ENCODE measurements at regions of chr7 and their contacts with region 1.

Region 1: DNA sequence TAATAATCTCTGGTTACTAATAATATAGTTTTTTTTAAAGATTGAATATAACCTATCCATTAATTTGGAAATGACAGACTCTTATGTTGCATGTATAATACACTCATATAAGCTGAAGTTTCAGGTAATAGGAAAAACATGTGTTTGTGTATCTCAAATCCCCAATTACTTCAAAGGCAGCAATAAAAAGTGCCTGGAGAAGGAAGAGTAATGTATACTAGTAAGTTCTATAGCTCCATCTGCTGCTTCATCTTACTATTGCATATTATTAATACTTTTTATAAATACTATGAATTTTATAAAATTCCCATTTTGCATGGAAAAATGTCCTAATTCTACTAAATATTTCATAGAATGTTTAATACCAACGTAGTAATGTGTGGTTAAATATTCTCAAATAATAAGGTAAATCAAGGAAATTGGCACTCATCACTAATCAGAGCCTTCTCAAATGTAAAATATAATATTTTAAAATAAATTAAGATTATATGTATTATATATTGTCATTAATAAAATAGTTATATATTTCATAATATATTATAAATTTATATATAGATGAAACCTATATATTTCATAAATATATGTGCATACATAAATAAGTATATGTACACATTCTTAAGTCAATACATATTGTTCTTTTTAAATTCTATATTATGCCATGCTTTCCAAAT is 311.9 kb downstream of the HGF start:
- DNase-seq: no peak
- H3K4me3 ChIP-seq: no peak overlapping the region
- CTCF ChIP-seq: peak; percentile 27

Region 2: DNA sequence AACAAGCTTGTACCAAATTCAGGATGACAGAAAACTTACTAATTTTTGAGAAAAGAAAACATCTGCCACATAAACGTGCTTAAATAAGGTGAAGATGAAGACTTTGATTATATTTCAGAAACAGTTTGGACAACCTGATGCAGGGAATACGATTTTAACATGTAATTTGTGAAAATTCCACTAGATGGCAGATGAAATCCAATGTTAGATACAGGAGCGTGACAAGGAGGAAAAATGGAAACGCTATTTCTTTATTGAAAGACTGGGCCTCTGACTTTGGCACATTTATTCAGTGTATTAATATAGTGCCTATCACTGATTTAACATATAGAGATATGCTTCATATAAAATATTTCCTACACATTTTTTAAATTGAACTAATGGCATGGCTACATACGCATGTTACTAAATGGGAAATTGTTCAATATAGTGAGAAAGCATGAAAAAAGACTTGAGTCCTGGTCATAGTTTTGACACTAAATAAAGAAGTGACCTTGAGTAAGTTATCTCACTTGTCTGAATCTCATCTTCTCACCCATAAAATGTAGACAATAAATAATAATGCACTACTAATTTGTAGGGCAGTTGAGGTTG is 758.8 kb before region 1 on chr7:
- CTCF ChIA-PET with region 1: interaction called, 48 read pairs
- POLR2A ChIA-PET with region 1: no interaction called
- DNase-seq: no peak
- H3K4me3 ChIP-seq: no peak overlapping the region
- CTCF ChIP-seq: peak; percentile 27

Region 3: GRCh38 chr7:81447351-81447952 is 10.5 kb before region 1 on chr7:
- CTCF ChIA-PET with region 1: interaction called, 15 read pairs
- POLR2A ChIA-PET with region 1: no interaction called
- DNase-seq: peak; percentile 14
- H3K4me3 ChIP-seq: no peak overlapping the region
- CTCF ChIP-seq: peak; percentile 57

Region 4: DNA sequence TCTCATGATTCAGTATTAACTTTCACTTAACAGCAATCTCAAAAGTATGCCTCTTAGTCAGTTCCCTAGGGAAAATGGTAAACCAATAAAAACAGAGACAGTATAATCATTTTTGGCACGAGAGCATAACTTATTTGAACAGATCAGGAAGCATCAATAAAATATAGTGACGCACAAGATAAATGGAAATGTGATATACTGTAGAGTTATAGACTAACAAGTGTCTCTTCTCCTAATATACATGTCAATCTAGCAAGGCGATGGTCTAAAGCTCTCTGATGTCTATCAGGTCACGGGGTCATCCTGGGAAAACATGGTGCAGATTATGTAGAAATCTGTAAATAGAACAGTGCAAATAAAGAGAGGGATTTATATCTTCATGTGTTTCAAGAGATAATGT is 180.2 kb after region 1 on chr7:
- CTCF ChIA-PET with region 1: no interaction called
- POLR2A ChIA-PET with region 1: no interaction called
- DNase-seq: peak; percentile 85
- H3K4me3 ChIP-seq: no peak overlapping the region
- CTCF ChIP-seq: no peak